GM12878 (cell line): ENCODE measurements at regions of chrX and their contacts with region 1.

Region 1: DNA sequence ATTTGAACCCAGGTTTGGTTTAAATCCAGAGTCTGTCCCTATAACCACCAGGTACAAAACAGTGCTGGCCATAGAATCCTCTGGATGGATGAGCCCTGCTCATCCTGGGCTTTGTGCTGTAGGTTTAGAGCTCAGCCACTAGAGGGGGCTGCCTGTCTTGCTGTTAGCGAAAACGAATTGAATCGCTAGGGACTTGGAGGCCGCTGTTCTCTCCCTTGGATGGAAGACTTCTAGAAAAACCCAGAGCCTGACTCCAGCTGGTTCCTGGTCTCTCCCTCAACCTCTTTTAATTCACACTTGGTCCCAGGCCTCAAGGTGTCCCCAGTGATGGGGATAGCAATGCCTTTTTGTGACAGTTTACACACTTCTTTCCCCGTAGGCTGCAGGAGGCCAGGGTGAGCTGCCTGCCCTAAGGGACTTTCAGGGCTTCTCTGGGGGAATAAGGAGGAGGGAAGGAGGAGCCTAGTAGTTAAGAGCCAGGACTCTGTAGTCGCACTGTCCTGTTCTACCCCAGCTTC is 8.7 kb downstream of the RIPPLY1 start:
- DNase-seq: no peak
- ATAC-seq: peak; percentile 79
- H3K4me3 ChIP-seq: no peak overlapping the region
- H3K27ac ChIP-seq: no peak overlapping the region
- H3K4me1 ChIP-seq: no peaks in the 10 kb centered on the region
- H3K27me3 ChIP-seq: no peaks in the 10 kb centered on the region; a peak in 1 of 4 replicates
- CTCF ChIP-seq: peak; percentile 79 to 85 (median 83)
- EP300 ChIP-seq: no peak
- POLR2A ChIP-seq: no peak
- RAD21 ChIP-seq: peak; percentile 63

Region 2: GRCh38 chrX:106874075-106874474 is 20.4 kb before region 1 on chrX:
- CTCF ChIA-PET with region 1: interaction called, 16 read pairs
- POLR2A ChIA-PET with region 1: no interaction called
- RAD21 ChIA-PET with region 1: interaction called, 10 read pairs
- SMC1A ChIA-PET with region 1: interaction called, 4 read pairs
- in situ Hi-C with region 1: no loop called
- intact Hi-C with region 1: no loop called
- DNase-seq: no peak
- ATAC-seq: peak; percentile 62
- H3K4me3 ChIP-seq: no peak overlapping the region
- H3K27ac ChIP-seq: no peak overlapping the region
- H3K4me1 ChIP-seq: no peaks in the 10 kb centered on the region
- H3K27me3 ChIP-seq: no peaks in the 10 kb centered on the region
- CTCF ChIP-seq: peak; percentile 38 to 53 (median 49); a peak in 5 of 6 replicates
- EP300 ChIP-seq: no peak
- POLR2A ChIP-seq: no peak
- RAD21 ChIP-seq: peak; percentile 35; the same call in 1 of the 2 replicates

Region 3: GRCh38 chrX:106952988-106953387 is 58.5 kb after region 1 on chrX:
- CTCF ChIA-PET with region 1: interaction called, 9 read pairs
- POLR2A ChIA-PET with region 1: no interaction called
- RAD21 ChIA-PET with region 1: no interaction called
- SMC1A ChIA-PET with region 1: interaction called, 3 read pairs
- in situ Hi-C with region 1: no loop called
- intact Hi-C with region 1: loop called (anchors 1 kb)
- DNase-seq: no peak
- ATAC-seq: no peak
- H3K4me3 ChIP-seq: no peak overlapping the region
- H3K27ac ChIP-seq: no peak overlapping the region
- H3K4me1 ChIP-seq: no peaks in the 10 kb centered on the region
- H3K27me3 ChIP-seq: no peaks in the 10 kb centered on the region; a peak in 1 of 4 replicates
- CTCF ChIP-seq: peak in 1 of 3 experiments; percentile 36; a peak in 3 of 6 replicates
- EP300 ChIP-seq: no peak
- POLR2A ChIP-seq: no peak
- RAD21 ChIP-seq: no peak

Region 4: GRCh38 chrX:106959901-106960300 is 65.5 kb after region 1 on chrX:
- CTCF ChIA-PET with region 1: interaction called, 10 read pairs
- POLR2A ChIA-PET with region 1: no interaction called
- RAD21 ChIA-PET with region 1: interaction called, 3 read pairs
- SMC1A ChIA-PET with region 1: interaction called, 3 read pairs
- in situ Hi-C with region 1: no loop called
- intact Hi-C with region 1: no loop called
- DNase-seq: no peak
- ATAC-seq: no peak
- H3K4me3 ChIP-seq: no peak overlapping the region
- H3K27ac ChIP-seq: no peak overlapping the region
- H3K4me1 ChIP-seq: no peaks in the 10 kb centered on the region
- H3K27me3 ChIP-seq: no peaks in the 10 kb centered on the region
- CTCF ChIP-seq: peak in 1 of 3 experiments; percentile 13; a peak in 1 of 6 replicates
- EP300 ChIP-seq: no peak
- POLR2A ChIP-seq: no peak
- RAD21 ChIP-seq: no peak

Region 5: GRCh38 chrX:106972896-106973295 is 78.4 kb after region 1 on chrX:
- CTCF ChIA-PET with region 1: no interaction called
- POLR2A ChIA-PET with region 1: no interaction called
- RAD21 ChIA-PET with region 1: no interaction called
- SMC1A ChIA-PET with region 1: no interaction called
- in situ Hi-C with region 1: no loop called
- intact Hi-C with region 1: no loop called
- DNase-seq: no peak
- ATAC-seq: no peak
- H3K4me3 ChIP-seq: no peak overlapping the region
- H3K27ac ChIP-seq: no peak overlapping the region
- H3K4me1 ChIP-seq: no peaks in the 10 kb centered on the region
- H3K27me3 ChIP-seq: no peaks in the 10 kb centered on the region
- CTCF ChIP-seq: no peak
- EP300 ChIP-seq: no peak
- POLR2A ChIP-seq: no peak
- RAD21 ChIP-seq: no peak

Region 6: DNA sequence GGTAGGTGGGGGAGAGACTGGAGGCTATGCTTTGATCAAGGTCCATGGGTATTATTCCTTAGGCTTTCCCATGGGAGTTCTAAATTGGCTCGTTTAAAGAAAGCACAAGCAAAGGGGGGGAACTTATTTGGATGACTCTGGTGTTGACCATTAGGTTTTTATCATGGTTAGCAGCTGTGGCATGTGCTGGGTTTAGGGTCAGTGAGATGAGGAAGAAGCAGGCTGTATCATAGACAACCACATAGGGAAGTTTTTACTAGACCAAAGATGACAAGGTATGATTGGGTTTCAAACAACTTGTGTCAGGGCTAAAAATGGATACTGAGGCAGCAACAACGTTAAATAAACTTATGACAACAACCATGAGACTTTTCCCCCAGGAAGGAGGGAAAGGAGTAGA is 409.7 kb after region 1 on chrX:
- CTCF ChIA-PET with region 1: no interaction called
- POLR2A ChIA-PET with region 1: no interaction called
- RAD21 ChIA-PET with region 1: no interaction called
- SMC1A ChIA-PET with region 1: interaction called, 3 read pairs
- in situ Hi-C with region 1: no loop called
- intact Hi-C with region 1: loop called (anchors 10 kb)
- DNase-seq: no peak
- ATAC-seq: no peak
- H3K4me3 ChIP-seq: no peak overlapping the region
- H3K27ac ChIP-seq: no peak overlapping the region
- H3K4me1 ChIP-seq: no peaks in the 10 kb centered on the region
- H3K27me3 ChIP-seq: no peaks in the 10 kb centered on the region
- CTCF ChIP-seq: no peak
- EP300 ChIP-seq: no peak
- POLR2A ChIP-seq: no peak
- RAD21 ChIP-seq: no peak

Region 7: GRCh38 chrX:107429090-107429489 is 534.6 kb after region 1 on chrX:
- CTCF ChIA-PET with region 1: interaction called, 13 read pairs
- POLR2A ChIA-PET with region 1: no interaction called
- RAD21 ChIA-PET with region 1: no interaction called
- SMC1A ChIA-PET with region 1: no interaction called
- in situ Hi-C with region 1: no loop called
- intact Hi-C with region 1: loop called (anchors 5 kb)
- DNase-seq: no peak
- ATAC-seq: no peak
- H3K4me3 ChIP-seq: no peak overlapping the region
- H3K27ac ChIP-seq: no peak overlapping the region
- H3K4me1 ChIP-seq: no peaks in the 10 kb centered on the region
- H3K27me3 ChIP-seq: no peaks in the 10 kb centered on the region; a peak in 1 of 4 replicates
- CTCF ChIP-seq: peak; percentile 42 to 61 (median 45)
- EP300 ChIP-seq: no peak
- POLR2A ChIP-seq: no peak
- RAD21 ChIP-seq: peak; percentile 42; the same call in 1 of the 2 replicates

Region 8: DNA sequence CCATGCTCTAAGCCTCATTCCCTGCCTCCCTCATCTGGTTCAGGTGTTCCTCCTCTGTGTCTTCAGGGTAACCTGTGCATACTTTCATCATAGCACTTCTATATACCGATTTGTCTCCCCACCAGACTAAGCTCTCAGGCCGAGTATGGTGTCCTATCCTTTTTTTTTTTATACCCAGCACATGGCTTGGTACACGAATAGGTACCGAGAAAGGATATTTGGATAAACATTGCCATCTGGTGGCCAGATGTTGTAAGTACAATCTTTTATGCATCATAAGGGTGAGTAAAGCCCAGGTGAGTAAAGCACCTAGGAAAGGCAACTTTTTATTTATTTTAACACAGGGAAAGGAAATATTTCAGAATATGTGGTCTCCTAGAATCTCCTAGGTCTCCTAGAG is 999.6 kb after region 1 on chrX:
- CTCF ChIA-PET with region 1: interaction called, 4 read pairs
- POLR2A ChIA-PET with region 1: no interaction called
- RAD21 ChIA-PET with region 1: no interaction called
- SMC1A ChIA-PET with region 1: no interaction called
- in situ Hi-C with region 1: no loop called
- intact Hi-C with region 1: loop called (anchors 10 kb)
- DNase-seq: peak; percentile 20
- ATAC-seq: peak; percentile 87
- H3K4me3 ChIP-seq: no peak overlapping the region
- H3K27ac ChIP-seq: no peak overlapping the region
- H3K4me1 ChIP-seq: no peaks in the 10 kb centered on the region
- H3K27me3 ChIP-seq: no peaks in the 10 kb centered on the region
- CTCF ChIP-seq: peak; percentile 47 to 63 (median 54)
- EP300 ChIP-seq: no peak
- POLR2A ChIP-seq: no peak
- RAD21 ChIP-seq: peak; percentile 68